H1 (cell line): ENCODE measurements at regions of chr20 and their contacts with region 1.

Region 1: GRCh38 chr20:46539113-46539512 is 11.3 kb downstream of the OCSTAMP start:
- DNase-seq: no peak
- H3K4me3 ChIP-seq: no peak overlapping the region
- H3K27ac ChIP-seq: no peak overlapping the region
- H3K4me1 ChIP-seq: peaks cover 0 to 5% (median 2%) of the 10 kb centered on the region in 4 experiments; a peak in 2 of 7 replicates
- H3K27me3 ChIP-seq: no peaks in the 10 kb centered on the region
- CTCF ChIP-seq: peak in 2 of 3 experiments; percentile 37 to 56; a peak in 3 of 4 replicates
- EP300 ChIP-seq: no peak
- POLR2A ChIP-seq: no peak
- RAD21 ChIP-seq: peak; percentile 15 to 42; a peak in 1 of 4 replicates

Region 2: GRCh38 chr20:46520976-46521579 is 18.0 kb before region 1 on chr20:
- CTCF ChIA-PET with region 1: interaction called, 48 read pairs
- POLR2A ChIA-PET with region 1: interaction called, 3 read pairs
- DNase-seq: peak; percentile 59 to 71
- H3K4me3 ChIP-seq: no peak overlapping the region
- H3K27ac ChIP-seq: no peak overlapping the region
- H3K4me1 ChIP-seq: no peaks in the 10 kb centered on the region; a peak in 1 of 7 replicates
- H3K27me3 ChIP-seq: no peaks in the 10 kb centered on the region
- CTCF ChIP-seq: peak; percentile 87 to 99 (median 91)
- EP300 ChIP-seq: no peak
- POLR2A ChIP-seq: no peak
- RAD21 ChIP-seq: peak; percentile 95 to 99

Region 3: DNA sequence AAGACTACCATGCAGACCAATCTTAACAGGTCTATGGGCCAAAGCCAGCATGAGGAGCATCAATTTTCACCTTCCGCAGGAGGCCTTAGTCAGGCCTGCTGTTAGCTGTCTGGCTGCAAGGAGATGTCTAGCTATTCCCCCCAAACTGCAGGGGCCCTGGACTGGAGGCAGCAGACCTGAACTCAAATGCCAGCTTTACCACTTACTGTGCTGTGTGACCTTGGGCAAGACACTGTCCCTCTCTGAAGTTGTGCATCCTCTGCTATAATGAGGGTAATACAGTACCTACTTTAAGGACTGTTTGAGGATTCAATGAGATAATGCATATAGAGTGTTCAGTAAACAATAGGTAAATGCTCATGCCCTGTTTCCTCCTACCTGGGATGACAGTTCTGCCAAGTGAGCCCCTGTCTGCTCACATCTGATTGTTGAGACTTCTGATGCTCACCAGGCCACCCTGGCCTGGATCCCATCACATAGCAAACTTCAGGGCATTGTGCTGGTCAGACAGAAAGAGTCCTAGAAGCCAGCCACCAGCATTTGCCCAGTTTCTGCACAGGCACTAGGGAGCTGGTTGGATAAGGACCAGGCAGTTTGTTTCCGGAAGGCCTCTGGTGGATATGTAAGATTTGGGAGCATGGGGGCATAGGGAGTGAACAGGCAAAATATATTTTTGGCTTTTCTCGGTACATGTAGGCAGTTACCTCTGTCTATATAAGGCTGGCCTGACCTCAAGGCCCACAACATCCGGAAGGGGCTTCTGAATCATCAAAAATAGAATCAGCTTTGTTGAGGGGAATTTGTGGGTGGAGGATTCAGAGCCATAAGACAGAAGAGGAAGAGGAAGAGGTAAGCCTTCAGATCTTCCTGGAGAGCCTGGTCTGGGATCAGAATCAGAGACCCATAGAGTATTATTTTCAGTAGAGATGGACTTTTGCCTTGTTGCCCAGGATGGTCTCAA is 13.6 kb after region 1 on chr20:
- CTCF ChIA-PET with region 1: interaction called, 20 read pairs
- POLR2A ChIA-PET with region 1: interaction called, 8 read pairs
- DNase-seq: no peak
- H3K4me3 ChIP-seq: no peak overlapping the region
- H3K27ac ChIP-seq: no peak overlapping the region
- H3K4me1 ChIP-seq: peaks cover 12 to 33% (median 23%) of the 10 kb centered on the region in 4 experiments
- H3K27me3 ChIP-seq: no peaks in the 10 kb centered on the region; a peak in 2 of 7 replicates
- CTCF ChIP-seq: no peak
- EP300 ChIP-seq: no peak
- POLR2A ChIP-seq: no peak
- RAD21 ChIP-seq: no peak